Mammary epithelial cell (primary cell): ENCODE measurements at regions of chr9 and their contacts with region 1.

Region 1: GRCh38 chr9:106816524-106816923 is 46.4 kb upstream of the ZNF462 start:
- DNase-seq: no peak
- H3K4me3 ChIP-seq: no peak overlapping the region
- H3K27ac ChIP-seq: no peak overlapping the region
- H3K4me1 ChIP-seq: peaks cover 5% of the 10 kb centered on the region
- H3K27me3 ChIP-seq: no peaks in the 10 kb centered on the region
- CTCF ChIP-seq: no peak

Region 2: GRCh38 chr9:106846857-106847256 is 30.3 kb after region 1 on chr9:
- CTCF ChIA-PET with region 1: no interaction called
- dilution Hi-C with region 1: no loop called
- in situ Hi-C with region 1: no loop called
- intact Hi-C with region 1: loop called (anchors 1 kb)
- DNase-seq: peak; percentile 83
- H3K4me3 ChIP-seq: no peak overlapping the region
- H3K27ac ChIP-seq: peak overlapping the region; percentile 35
- H3K4me1 ChIP-seq: peaks cover 9% of the 10 kb centered on the region
- H3K27me3 ChIP-seq: no peaks in the 10 kb centered on the region
- CTCF ChIP-seq: no peak